AG04450 (cell line): ENCODE measurements at regions of chrX and their contacts with region 1.

Region 1: DNA sequence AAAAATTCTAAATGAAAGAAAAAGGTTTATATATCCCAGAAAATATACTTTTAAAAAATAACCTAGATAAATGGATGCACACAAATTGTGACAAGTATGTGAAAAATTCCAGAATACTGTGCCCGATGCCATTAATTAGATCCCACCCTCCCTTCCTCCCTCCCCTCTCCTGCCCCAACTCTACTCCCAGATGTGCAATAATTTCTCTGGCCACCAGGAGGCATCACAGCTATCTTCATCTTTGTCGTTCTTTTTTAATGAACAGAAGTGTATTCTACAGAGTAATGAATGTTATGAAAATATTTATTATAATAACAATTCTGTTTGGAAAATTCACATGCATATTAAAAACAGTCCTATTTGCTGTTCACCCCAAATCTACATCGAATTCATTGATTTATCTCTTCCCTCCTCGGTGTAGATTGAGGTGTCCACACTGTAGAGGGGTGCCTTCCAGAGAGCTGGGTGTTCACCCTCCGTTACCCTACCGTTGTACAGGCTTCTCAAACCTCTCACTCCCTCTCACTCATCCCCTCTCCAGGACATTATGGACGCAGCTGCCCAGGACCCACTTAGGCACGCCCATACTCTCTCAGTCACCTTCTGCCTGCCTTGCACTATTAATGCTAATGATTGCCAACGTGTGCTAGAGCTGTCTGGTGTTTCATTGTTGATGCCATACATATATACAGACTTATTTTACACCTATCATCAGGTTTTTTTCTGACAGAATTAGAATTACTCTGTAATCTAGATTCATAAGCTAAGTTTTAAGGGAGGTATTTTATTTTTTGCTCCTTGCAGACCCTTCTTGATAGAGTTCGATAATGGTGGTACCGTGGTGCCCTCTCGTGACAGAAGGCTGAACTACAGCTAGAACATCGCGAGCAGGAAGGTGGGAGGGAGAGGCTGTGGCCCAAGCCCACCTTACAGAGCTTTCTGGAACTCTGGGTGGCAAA is 14.1 kb downstream of the RAB40AL start:
- DNase-seq: no peak
- H3K4me3 ChIP-seq: no peak overlapping the region
- H3K27ac ChIP-seq: no peak overlapping the region
- H3K27me3 ChIP-seq: no peaks in the 10 kb centered on the region
- CTCF ChIP-seq: peak; percentile 67

Region 2: DNA sequence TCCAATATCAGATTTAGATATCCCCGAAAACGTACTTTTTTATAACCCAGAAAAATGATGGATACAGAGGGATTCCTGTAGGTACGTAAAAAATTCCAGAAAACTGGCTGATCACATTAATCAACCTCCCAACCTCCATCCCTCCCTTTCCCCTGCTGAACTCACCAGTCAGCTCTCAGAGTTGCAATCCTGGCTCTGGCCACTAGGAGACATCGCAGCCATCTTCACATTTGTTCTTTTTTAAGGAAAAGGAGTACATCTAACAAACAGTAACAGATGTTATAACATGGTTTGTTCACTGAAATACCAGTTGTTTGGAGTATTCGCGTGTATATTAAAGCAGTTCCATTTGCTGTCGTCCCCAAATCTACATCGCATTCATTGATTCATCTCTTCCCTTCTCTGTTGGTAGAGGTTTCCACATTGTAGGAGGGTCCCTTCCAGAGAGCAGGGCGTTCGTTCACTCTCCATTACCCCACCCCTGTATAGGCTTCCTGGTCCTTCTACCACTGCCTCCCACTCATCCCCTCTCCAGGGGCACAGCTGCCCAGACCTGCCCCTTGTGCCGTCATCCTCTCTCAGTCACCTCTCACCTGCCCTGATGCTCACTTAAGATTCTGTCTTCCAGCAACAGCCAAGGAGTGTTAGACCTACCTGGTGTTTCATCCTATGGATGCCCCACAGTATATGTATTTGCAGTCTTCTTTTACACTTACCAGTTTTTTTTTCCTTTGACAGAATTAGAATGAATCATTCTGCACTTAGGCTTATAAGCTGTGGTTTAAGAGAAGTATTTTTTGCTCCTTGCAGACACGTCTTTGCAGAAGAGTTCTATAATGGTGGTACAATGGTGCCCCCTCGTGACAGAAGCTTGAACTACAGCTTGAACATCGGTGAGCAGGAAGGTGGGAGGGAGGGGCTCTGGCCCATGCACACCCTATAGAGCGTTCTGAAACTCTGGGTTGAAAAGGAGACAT is 51.0 kb before region 1 on chrX:
- CTCF ChIA-PET with region 1: interaction called, 13 read pairs
- POLR2A ChIA-PET with region 1: interaction called, 3 read pairs
- DNase-seq: peak; percentile 26
- H3K4me3 ChIP-seq: no peak overlapping the region
- H3K27ac ChIP-seq: no peak overlapping the region
- H3K27me3 ChIP-seq: no peaks in the 10 kb centered on the region
- CTCF ChIP-seq: peak; percentile 64

Region 3: DNA sequence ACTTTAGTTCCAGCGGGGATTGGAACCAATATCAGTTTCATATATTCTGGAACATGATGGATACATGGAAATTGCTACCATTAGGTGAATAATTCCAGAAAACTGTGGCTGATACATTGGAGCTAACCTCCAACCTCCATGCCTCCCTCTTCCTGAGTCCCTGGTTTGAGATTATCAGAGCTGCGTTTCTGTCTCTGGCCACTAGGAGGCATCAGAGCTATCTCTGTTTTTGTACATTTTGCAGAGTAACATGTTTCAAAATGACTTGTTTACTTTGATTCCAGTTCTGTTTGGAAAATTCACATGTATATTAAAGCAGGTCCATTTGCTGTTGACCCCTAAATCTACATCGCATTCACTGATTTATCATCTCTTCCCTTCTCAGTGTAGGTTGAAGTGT is 16.6 kb before region 1 on chrX:
- CTCF ChIA-PET with region 1: interaction called, 32 read pairs
- POLR2A ChIA-PET with region 1: no interaction called
- DNase-seq: no peak
- H3K4me3 ChIP-seq: no peak overlapping the region
- H3K27ac ChIP-seq: no peak overlapping the region
- H3K27me3 ChIP-seq: no peaks in the 10 kb centered on the region
- CTCF ChIP-seq: peak; percentile 64

Region 4: DNA sequence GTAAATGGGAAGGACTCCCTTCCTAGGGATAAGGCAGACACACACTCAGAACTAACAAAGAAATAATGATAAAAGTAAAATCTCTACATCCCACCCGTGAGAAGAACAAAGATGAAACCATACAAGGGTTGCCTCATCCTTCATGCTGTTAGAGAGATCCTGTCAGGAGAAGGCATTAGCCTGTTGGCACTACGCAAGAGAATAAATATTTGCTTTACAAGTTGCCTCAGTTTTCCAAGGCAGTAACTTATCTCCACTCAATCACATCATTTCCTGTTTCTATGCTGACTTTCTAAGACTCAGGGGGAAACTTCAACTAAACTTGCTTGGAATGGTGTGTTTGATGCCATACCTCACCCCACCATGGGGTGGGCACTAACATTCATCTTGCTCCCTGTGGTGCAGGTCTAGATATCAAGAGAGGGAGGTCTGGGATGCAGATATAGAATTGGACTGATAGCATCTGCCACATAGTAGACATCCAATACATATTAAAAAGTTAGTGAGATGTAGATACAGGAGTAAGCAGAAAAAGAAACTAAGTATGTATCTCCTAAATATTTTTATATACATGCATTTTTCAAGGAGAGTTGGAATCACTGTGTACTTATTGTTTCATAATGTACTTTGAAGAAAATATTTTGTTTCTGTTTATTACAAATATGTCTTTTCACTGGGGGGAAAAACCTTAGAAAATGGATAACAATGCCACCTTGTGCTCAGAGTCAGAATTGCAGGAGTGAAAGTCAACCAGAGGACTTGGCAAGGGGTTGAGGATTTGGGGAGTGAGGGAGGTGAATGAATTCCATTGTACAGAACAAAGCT is 206.5 kb after region 1 on chrX:
- CTCF ChIA-PET with region 1: interaction called, 26 read pairs
- POLR2A ChIA-PET with region 1: no interaction called
- DNase-seq: no peak
- H3K4me3 ChIP-seq: no peak overlapping the region
- H3K27ac ChIP-seq: no peak overlapping the region
- H3K27me3 ChIP-seq: no peaks in the 10 kb centered on the region
- CTCF ChIP-seq: peak; percentile 68

Region 5: DNA sequence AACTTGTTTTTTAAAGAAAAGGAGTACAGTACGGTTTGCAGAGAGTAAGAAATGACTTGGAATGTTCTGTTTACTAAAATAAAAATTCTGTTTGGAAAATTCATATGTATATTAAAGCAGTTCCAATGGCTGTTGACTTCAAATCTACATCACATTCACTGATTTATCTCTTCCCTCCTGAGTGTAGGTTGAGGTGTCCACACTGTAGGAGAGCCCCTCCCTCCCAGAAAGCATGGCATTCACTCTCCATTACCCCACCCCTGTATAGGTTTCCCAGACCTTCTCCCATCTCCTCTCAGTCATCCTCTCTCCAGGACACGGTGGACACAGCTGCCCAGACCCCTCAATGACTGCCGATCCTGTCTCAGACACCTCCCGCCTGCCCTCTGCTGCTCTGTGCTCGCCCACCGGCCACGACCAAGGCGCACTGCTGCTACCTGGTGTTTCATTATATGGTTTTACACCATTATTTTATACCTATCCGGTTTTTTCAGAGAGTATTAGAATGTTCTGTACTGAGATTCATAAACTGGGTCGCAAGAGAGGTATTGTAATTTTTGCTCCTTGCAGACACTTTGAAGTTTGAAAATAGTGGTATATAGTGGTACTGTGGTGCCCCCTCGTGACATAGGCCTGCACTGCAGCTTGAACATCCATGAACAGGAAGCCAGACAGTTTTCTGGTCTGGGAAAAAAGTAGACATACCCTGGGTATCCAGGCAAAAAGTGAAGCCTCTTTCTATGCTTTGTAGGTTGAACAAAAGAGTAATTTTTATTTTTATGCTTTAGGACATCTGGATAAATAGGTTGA is 225.0 kb after region 1 on chrX:
- CTCF ChIA-PET with region 1: interaction called, 56 read pairs
- POLR2A ChIA-PET with region 1: no interaction called
- DNase-seq: no peak
- H3K4me3 ChIP-seq: peak overlapping the region; percentile 17; the same call in 1 of the 2 replicates
- H3K27ac ChIP-seq: no peak overlapping the region
- H3K27me3 ChIP-seq: no peaks in the 10 kb centered on the region
- CTCF ChIP-seq: peak; percentile 72

Region 6: GRCh38 chrX:103356130-103356798 is 405.1 kb after region 1 on chrX and contains the start of gene TCEAL9:
- CTCF ChIA-PET with region 1: no interaction called
- POLR2A ChIA-PET with region 1: no interaction called
- DNase-seq: peak; percentile 51
- H3K4me3 ChIP-seq: peak within 1 kb of the TSS; percentile 79
- H3K27ac ChIP-seq: peak within 1 kb of the TSS; percentile 81
- H3K27me3 ChIP-seq: no peaks in the 10 kb centered on the region
- CTCF ChIP-seq: no peak
- polyA plus RNA-seq, gene TCEAL9: 141 and 234 TPM in 2 replicates

Region 7: DNA sequence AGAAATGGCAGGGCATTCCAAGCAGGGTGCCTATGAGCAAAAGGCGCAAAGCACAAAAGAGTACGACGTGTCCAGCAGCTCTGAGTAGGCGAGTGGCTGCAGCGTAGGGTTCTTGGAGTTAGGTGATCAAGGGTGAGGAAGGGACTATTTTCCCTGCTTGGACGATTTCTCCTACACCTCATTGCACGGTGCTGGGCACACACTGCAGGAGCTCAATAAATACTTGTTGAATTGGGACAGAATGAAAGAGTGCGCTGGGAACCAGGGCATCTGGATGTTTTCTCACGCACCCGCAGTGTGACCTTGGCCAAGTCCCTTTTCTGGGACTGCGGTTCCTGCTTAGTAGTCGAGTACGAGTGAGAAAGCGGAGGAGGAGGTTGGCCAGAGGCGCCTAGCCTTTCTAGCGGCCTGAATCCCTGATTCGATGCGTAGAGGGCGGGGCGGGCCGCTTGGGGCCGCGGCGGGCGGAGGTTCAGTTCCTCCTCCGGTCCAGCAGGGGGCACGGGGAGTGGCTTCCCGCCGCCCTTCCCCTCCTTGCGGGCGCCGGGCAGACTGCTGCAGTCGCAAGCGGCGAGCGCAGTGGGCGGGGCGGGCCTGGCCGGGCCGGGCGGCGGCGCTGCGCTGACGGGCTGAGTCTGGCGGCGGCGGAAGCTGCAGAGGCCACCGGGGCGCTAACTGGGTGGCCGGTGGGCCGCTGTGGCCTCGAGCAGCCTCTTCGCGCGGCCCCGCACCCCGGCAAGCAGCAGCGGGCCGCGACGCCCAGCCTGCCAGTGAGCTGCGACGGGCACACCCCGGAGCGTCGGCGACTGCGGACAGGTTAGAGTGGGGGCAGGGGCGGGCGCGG is 1214.9 kb after region 1 on chrX and contains the start of gene FAM199X:
- CTCF ChIA-PET with region 1: no interaction called
- POLR2A ChIA-PET with region 1: no interaction called
- DNase-seq: peak; percentile 45
- H3K4me3 ChIP-seq: peak within 1 kb of the TSS; percentile 85
- H3K27ac ChIP-seq: peak within 1 kb of the TSS; percentile 31
- H3K27me3 ChIP-seq: no peaks in the 10 kb centered on the region
- CTCF ChIP-seq: peak; percentile 60
- polyA plus RNA-seq, gene FAM199X: 6.0 and 7.1 TPM in 2 replicates